ENCODE measurements at regions of chr9 and their contacts with region 1.

Region 1: DNA sequence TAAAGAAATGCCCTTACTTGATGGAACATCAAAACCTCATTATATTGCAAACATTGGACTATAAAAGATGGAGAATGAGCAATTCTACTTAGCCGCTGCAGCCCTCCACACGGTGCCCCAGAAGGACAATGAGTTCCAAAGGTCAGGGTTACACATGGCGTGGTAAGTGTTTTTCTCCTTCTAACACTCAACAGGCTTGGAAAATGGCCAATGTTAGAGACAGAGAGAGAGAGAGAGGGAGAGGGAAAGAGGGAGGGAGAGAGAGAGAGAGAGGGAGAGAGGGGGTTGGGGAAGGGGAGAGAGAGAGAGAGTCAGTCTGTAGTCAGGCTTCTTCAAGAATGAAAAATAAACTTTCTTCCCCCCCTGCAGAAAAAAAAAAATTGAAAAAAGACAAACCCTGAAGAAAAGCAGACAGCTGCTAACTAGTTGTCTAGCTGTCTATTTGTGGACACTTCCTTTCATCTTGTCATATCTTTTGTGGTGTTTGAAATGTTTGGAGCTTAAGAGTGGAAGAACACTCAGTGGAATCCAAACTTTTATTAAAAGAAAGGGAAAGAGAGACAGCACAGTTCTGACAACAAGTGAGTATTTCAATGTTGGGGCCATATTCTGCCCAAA is 324.8 kb downstream of the TMEM38B start:
- DNase-seq: peak in 4 of 5 donors; percentile 11 to 35 (median 28)
- ATAC-seq: peak; percentile 87 to 94 (median 92)
- H3K4me3 ChIP-seq: no peak overlapping the region
- H3K27ac ChIP-seq: no peak overlapping the region
- H3K4me1 ChIP-seq: peaks cover 0 to 14% (median 2%) of the 10 kb centered on the region in 12 donors
- H3K27me3 ChIP-seq: no peaks in the 10 kb centered on the region
- CTCF ChIP-seq: no peak
- POLR2A ChIP-seq: no peak

Region 2: DNA sequence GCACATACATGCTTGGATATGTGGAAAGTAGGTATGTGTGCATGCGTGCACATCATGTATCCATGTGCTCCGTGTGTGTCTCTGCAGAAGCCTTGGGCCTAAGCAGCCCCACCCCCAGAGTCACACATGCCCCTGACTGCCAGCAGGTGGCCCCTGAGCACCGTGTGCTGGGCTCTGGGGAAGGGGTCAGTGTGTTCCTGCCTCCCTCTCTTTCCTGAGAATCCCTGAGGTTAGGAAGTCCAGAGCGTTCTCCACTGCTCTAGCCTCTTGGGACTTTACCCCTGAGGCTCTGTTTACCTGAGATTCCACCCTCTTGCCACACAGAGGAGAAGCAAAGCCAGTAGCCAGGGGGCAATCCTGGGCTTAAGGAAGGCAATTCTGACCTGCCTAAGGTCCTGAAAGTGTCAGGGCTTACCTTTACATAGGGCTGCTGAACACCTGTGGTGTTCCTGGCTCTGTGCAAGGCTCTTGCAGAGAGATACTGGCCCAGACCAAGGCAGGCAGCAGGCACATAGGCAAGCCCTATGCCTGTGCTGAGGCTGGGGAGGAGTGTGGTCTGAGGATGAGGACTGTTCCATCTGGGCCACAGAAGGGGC is 117.5 kb before region 1 on chr9:
- intact Hi-C with region 1: loop called in 1 of 10 experiments (anchors 10 kb)
- DNase-seq: peak in 3 of 5 donors; percentile 27 to 52 (median 46)
- ATAC-seq: peak; percentile 73 to 96 (median 94)
- H3K4me3 ChIP-seq: no peak overlapping the region
- H3K27ac ChIP-seq: no peak overlapping the region
- H3K4me1 ChIP-seq: peaks cover 0 to 3% (median 0%) of the 10 kb centered on the region in 12 donors
- H3K27me3 ChIP-seq: no peaks in the 10 kb centered on the region
- CTCF ChIP-seq: peak; percentile 51 to 77 (median 72)
- POLR2A ChIP-seq: no peak